Activated CD4-positive, alpha-beta T cell treated with anti-CD3 and anti-CD28 coated beads, Interleukin-2, amount 10 ng/mL, durations not matched to agents 24 days and 14 days (primary cell): ENCODE measurements at regions of chrX and their contacts with region 1.

Region 1: DNA sequence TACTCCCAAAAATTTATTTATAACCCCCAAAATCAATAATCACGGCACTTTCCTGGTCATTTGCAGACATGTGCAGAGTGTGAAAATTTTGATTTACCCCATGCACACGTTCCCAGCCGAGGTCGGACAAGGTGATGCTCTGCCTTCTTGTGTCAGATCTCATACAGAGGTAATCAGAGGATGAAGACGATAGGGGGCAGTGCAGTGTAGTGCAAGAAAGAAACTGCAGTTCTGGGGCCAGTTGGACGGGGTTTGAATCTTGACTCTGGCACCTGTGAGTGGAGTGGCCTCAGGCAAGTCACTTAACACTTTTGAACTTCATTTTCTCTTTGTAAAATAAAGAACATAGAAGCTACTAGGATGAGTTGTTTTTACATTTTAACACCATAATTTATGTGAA is 88.4 kb downstream of the FRMPD3 start:
- DNase-seq: peak; percentile 75
- H3K4me3 Mint-ChIP-seq: no peak overlapping the region
- H3K27ac Mint-ChIP-seq: no peak overlapping the region
- H3K4me1 Mint-ChIP-seq: no peaks in the 10 kb centered on the region
- H3K27me3 Mint-ChIP-seq: peaks cover 11% of the 10 kb centered on the region

Region 2: GRCh38 chrX:107894038-107894437 is 356.2 kb after region 1 on chrX:
- intact Hi-C with region 1: loop called (anchors 5 kb)
- DNase-seq: peak; percentile 80
- H3K4me3 Mint-ChIP-seq: no peak overlapping the region
- H3K27ac Mint-ChIP-seq: no peak overlapping the region
- H3K4me1 Mint-ChIP-seq: no peaks in the 10 kb centered on the region
- H3K27me3 Mint-ChIP-seq: peaks cover 2% of the 10 kb centered on the region